Naive thymus-derived CD8-positive, alpha-beta T cell (primary cell): ENCODE measurements at regions of chr5 and their contacts with region 1.

Region 1: GRCh38 chr5:35657877-35658276 is 40.2 kb downstream of the SPEF2 start:
- DNase-seq: peak in 2 of 10 donors; percentile 37 to 42
- ATAC-seq: peak; percentile 54 to 70
- H3K4me3 Mint-ChIP-seq: peak overlapping the region in 5 of 10 donors; percentile 0 to 63 (median 27)
- H3K27ac Mint-ChIP-seq: peak overlapping the region; percentile 21 to 87 (median 58)
- H3K4me1 Mint-ChIP-seq: peaks cover 12 to 27% (median 21%) of the 10 kb centered on the region in 4 donors
- H3K27me3 Mint-ChIP-seq: no peaks in the 10 kb centered on the region

Region 2: DNA sequence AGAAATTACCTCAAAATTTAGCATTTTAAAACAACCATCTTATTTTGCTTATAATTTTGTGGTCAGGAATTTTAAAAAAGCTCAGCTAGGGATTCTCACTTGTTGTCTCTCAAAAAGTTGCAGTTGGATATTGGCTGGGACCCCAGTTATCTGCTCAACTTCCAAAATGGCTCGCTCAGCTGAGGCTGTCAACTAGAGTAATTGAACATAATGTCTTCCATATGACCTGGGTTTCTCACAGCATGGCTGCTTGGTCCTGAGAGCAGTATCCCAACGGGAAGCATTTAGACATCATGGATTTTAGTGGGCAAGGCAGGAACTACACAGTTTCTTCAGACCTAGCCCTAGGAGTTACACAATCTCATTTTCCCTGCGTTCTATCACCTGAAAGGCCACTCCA is 103.9 kb before region 1 on chr5:
- POLR2A ChIA-PET with region 1: no interaction called
- DNase-seq: no peak
- ATAC-seq: no peak
- H3K4me3 Mint-ChIP-seq: no peak overlapping the region
- H3K27ac Mint-ChIP-seq: no peak overlapping the region
- H3K4me1 Mint-ChIP-seq: no peaks in the 10 kb centered on the region
- H3K27me3 Mint-ChIP-seq: peaks cover 0 to 6% (median 0%) of the 10 kb centered on the region in 5 donors

Region 3: DNA sequence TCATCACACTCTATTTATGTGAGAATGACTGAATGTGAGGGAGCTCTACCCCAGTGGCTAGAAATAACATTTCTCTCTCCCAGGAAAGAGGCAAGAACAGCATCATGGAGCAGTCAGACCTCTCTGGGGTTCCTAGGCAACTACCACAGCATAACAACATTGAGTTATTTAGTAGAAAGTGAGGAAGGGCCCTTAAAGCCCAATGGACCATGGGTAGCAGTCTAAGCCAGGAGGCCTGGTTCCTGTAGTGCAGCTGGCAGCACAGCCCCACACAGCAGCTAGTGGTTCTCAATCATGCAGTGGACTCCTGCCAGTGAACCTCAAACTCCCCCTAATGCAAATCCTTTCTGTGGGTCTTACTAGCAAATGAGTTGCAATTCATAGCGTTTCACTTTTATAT is 15.1 kb after region 1 on chr5:
- POLR2A ChIA-PET with region 1: interaction called, 10 read pairs
- DNase-seq: peak in 8 of 10 donors; percentile 9 to 73 (median 58)
- ATAC-seq: peak; percentile 78 to 79
- H3K4me3 Mint-ChIP-seq: peak overlapping the region; percentile 8 to 72 (median 56)
- H3K27ac Mint-ChIP-seq: peak overlapping the region; percentile 92 to 97 (median 95)
- H3K4me1 Mint-ChIP-seq: peaks cover 18 to 76% (median 58%) of the 10 kb centered on the region in 4 donors
- H3K27me3 Mint-ChIP-seq: no peaks in the 10 kb centered on the region